Activated CD8-positive, alpha-beta T cell treated with anti-CD3 and anti-CD28 coated beads, Interleukin-2, amount 10 ng/mL, durations not matched to agents 7 days and 5 days (primary cell): ENCODE measurements at regions of chr5 and their contacts with region 1.

Region 1: DNA sequence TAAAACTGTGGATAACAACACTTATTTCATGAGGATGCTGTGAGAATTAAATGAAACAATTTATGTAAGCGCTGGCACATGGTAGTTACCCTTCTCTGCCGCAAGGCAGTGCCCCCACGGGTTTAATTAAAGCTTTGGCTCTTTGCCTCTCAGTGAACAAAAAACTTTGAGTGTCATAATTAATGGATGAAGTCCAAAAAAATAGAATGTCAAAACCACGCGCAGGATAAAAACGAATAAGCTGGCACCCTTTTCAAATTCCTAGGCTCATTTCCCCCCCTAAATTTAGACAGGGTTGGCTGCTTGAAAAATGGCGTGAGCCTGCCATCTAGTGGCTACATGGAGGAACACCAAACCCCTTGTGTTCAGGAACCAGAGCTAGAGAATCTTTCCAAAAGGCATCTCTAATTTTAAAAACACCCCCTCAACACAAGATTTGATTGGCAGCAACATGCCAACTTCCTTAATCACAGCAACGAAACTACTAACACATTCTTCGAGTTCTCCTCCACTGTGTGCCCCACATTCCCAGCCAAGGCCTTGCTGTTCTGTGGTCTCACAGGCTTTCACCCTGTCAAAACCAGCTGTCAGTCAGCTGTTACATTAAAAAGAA is 29.0 kb upstream of the CCNG1 start:
- DNase-seq: peak; percentile 68
- ATAC-seq: peak; percentile 91
- H3K4me3 Mint-ChIP-seq: no peak overlapping the region
- H3K27ac Mint-ChIP-seq: no peak overlapping the region
- H3K4me1 Mint-ChIP-seq: peaks cover 11% of the 10 kb centered on the region
- H3K27me3 Mint-ChIP-seq: peaks cover 11% of the 10 kb centered on the region

Region 2: GRCh38 chr5:161544350-161544765 is 1864.1 kb before region 1 on chr5:
- CTCF ChIA-PET with region 1: interaction called, 10 read pairs
- POLR2A ChIA-PET with region 1: no interaction called
- DNase-seq: peak; percentile 43
- ATAC-seq: peak; percentile 52
- H3K4me3 Mint-ChIP-seq: no peak overlapping the region
- H3K27ac Mint-ChIP-seq: no peak overlapping the region
- H3K4me1 Mint-ChIP-seq: peaks cover 13% of the 10 kb centered on the region
- H3K27me3 Mint-ChIP-seq: peaks cover 42% of the 10 kb centered on the region

Region 3: DNA sequence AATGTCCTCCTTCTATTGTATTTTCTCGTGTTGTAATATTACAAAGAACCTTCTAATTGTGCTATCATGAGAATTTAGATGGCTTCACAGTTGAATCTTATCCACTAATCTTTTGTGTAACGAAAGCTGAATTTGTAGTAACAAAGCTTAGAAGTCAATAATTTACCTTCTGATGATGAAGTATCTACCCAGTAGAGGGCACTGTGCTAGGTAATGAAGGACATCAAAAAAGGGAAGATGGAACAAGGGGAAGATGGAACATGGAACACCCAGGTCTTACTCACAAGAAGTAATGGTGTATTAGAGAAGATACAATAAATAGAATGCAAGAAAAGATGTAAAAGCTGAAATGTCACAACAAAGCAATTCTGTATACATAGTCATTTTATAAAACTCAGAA is 102.0 kb before region 1 on chr5:
- CTCF ChIA-PET with region 1: interaction called, 18 read pairs
- POLR2A ChIA-PET with region 1: no interaction called
- DNase-seq: no peak
- ATAC-seq: no peak
- H3K4me3 Mint-ChIP-seq: no peak overlapping the region
- H3K27ac Mint-ChIP-seq: no peak overlapping the region
- H3K4me1 Mint-ChIP-seq: no peaks in the 10 kb centered on the region
- H3K27me3 Mint-ChIP-seq: no peaks in the 10 kb centered on the region

Region 4: GRCh38 chr5:163347671-163348070 is 60.7 kb before region 1 on chr5:
- CTCF ChIA-PET with region 1: interaction called, 25 read pairs
- POLR2A ChIA-PET with region 1: no interaction called
- DNase-seq: peak; percentile 66
- ATAC-seq: peak; percentile 60
- H3K4me3 Mint-ChIP-seq: no peak overlapping the region
- H3K27ac Mint-ChIP-seq: no peak overlapping the region
- H3K4me1 Mint-ChIP-seq: no peaks in the 10 kb centered on the region
- H3K27me3 Mint-ChIP-seq: no peaks in the 10 kb centered on the region

Region 5: GRCh38 chr5:163397354-163397753 is 11.1 kb before region 1 on chr5:
- CTCF ChIA-PET with region 1: interaction called, 23 read pairs
- POLR2A ChIA-PET with region 1: no interaction called
- DNase-seq: no peak
- ATAC-seq: no peak
- H3K4me3 Mint-ChIP-seq: no peak overlapping the region
- H3K27ac Mint-ChIP-seq: no peak overlapping the region
- H3K4me1 Mint-ChIP-seq: no peaks in the 10 kb centered on the region
- H3K27me3 Mint-ChIP-seq: peaks cover 15% of the 10 kb centered on the region

Region 6: DNA sequence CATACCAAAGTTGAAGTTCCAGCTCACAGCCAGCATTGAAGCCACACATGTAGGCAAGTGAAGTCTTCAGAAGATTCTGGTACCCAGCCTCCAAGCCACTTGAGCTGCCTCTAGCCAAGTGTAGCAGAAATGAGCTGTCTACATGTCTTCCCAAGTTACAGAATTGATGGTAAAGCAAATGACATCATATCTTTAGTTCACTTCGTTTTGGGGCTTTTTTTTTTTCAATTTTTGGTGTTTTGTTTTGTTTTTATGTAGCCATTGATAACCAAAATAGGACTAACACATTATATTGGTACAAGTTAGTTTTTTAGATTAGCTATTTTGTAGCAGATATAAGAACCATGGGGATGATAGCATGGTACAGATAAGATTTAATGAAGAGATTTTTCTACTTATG is 13.3 kb after region 1 on chr5:
- CTCF ChIA-PET with region 1: interaction called, 13 read pairs
- POLR2A ChIA-PET with region 1: no interaction called
- DNase-seq: no peak
- ATAC-seq: no peak
- H3K4me3 Mint-ChIP-seq: no peak overlapping the region
- H3K27ac Mint-ChIP-seq: no peak overlapping the region
- H3K4me1 Mint-ChIP-seq: no peaks in the 10 kb centered on the region
- H3K27me3 Mint-ChIP-seq: peaks cover 5% of the 10 kb centered on the region